ENCODE measurements at regions of chr21 and their contacts with region 1.

Region 1: DNA sequence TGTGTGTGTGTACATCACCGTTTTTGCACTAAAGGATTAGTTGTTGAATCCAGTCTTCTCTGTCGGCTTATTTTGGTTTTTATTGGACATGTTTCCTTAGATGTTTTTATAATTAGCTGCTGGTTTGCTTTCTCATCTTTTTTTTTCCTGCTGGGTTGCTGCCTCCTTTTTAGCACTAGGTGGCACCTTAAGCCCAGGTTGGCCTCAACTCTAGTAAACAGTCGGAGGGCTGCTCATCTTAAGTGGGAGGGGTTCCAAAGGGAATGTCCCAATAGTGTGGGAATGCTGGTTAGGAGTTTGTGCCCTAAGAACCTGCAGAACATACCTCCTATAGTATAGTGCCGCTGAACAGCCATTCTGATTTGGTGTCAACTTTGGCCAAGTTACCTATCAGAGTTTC is 570.1 kb upstream of the CXADR start:
- DNase-seq: peak; percentile 43 to 57
- H3K4me3 ChIP-seq: no peak overlapping the region
- H3K4me3 Mint-ChIP-seq: no peak overlapping the region
- H3K27ac Mint-ChIP-seq: no peak overlapping the region
- H3K4me1 ChIP-seq: no peaks in the 10 kb centered on the region
- H3K4me1 Mint-ChIP-seq: no peaks in the 10 kb centered on the region
- H3K27me3 ChIP-seq: no peaks in the 10 kb centered on the region
- H3K27me3 Mint-ChIP-seq: peaks cover 10% of the 10 kb centered on the region
- CTCF ChIP-seq: peak; percentile 62 to 79

Region 2: GRCh38 chr21:17045214-17045853 is 102.6 kb after region 1 on chr21:
- CTCF ChIA-PET with region 1: interaction called, 3 read pairs
- POLR2A ChIA-PET with region 1: no interaction called
- intact Hi-C with region 1: loop called (anchors 2 kb)
- DNase-seq: peak in 1 of 2 experiments; percentile 15
- H3K4me3 ChIP-seq: no peak overlapping the region
- H3K4me3 Mint-ChIP-seq: no peak overlapping the region
- H3K27ac Mint-ChIP-seq: no peak overlapping the region
- H3K4me1 ChIP-seq: no peaks in the 10 kb centered on the region
- H3K4me1 Mint-ChIP-seq: no peaks in the 10 kb centered on the region
- H3K27me3 ChIP-seq: no peaks in the 10 kb centered on the region; the same call in 1 of the 2 replicates
- H3K27me3 Mint-ChIP-seq: no peaks in the 10 kb centered on the region
- CTCF ChIP-seq: peak; percentile 33 to 47

Region 3: DNA sequence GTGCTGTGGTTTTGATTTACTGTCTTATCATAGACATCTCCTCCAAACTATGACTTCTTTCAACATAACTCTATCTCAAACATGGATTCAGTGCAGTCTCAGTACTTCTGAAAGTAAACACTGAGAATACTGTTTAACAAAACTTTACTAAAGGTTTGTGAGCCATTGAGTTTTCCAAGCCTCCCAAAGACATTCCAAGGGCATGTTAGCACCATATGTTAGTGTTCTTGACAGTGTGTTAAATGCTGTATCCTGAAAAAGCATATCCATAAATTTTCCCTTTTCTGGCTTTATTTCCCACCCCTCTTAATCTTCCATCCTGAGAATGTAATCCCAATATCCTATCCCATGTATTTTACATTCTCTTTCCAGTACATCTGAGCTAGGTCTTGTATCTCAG is 123.3 kb after region 1 on chr21:
- CTCF ChIA-PET with region 1: no interaction called
- POLR2A ChIA-PET with region 1: no interaction called
- intact Hi-C with region 1: no loop called
- DNase-seq: no peak
- H3K4me3 ChIP-seq: no peak overlapping the region
- H3K4me3 Mint-ChIP-seq: no peak overlapping the region
- H3K27ac Mint-ChIP-seq: no peak overlapping the region
- H3K4me1 ChIP-seq: no peaks in the 10 kb centered on the region
- H3K4me1 Mint-ChIP-seq: no peaks in the 10 kb centered on the region
- H3K27me3 ChIP-seq: no peaks in the 10 kb centered on the region
- H3K27me3 Mint-ChIP-seq: peaks cover 8% of the 10 kb centered on the region
- CTCF ChIP-seq: no peak

Region 4: GRCh38 chr21:17146431-17146830 is 203.7 kb after region 1 on chr21:
- CTCF ChIA-PET with region 1: no interaction called
- POLR2A ChIA-PET with region 1: no interaction called
- intact Hi-C with region 1: loop called (anchors 2 kb)
- DNase-seq: no peak
- H3K4me3 ChIP-seq: no peak overlapping the region
- H3K4me3 Mint-ChIP-seq: no peak overlapping the region
- H3K27ac Mint-ChIP-seq: no peak overlapping the region
- H3K4me1 ChIP-seq: no peaks in the 10 kb centered on the region
- H3K4me1 Mint-ChIP-seq: no peaks in the 10 kb centered on the region
- H3K27me3 ChIP-seq: no peaks in the 10 kb centered on the region
- H3K27me3 Mint-ChIP-seq: peaks cover 20% of the 10 kb centered on the region
- CTCF ChIP-seq: no peak

Region 5: DNA sequence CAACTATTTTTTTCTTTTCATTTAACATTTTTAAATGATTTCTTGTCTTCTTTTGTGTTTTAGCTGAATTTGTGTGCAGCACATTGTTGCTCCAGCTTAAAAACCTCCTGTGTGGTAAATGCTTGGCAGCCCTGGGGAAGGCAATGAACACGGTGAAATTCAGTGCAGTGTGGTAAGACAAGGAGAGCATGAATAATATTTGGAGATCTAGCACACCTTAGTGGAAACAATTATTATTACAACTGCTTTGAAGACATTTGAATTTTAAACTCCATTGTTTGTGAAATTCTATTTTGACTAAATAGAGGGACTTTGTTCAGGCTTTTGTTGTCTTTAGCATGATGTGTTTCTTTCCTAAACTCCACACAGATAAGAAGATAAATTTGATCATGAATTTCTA is 327.5 kb after region 1 on chr21:
- CTCF ChIA-PET with region 1: no interaction called
- POLR2A ChIA-PET with region 1: no interaction called
- intact Hi-C with region 1: loop called (anchors 1 kb)
- DNase-seq: peak in 1 of 2 experiments; percentile 12
- H3K4me3 ChIP-seq: no peak overlapping the region
- H3K4me3 Mint-ChIP-seq: no peak overlapping the region
- H3K27ac Mint-ChIP-seq: no peak overlapping the region
- H3K4me1 ChIP-seq: no peaks in the 10 kb centered on the region
- H3K4me1 Mint-ChIP-seq: no peaks in the 10 kb centered on the region
- H3K27me3 ChIP-seq: no peaks in the 10 kb centered on the region
- H3K27me3 Mint-ChIP-seq: peaks cover 12% of the 10 kb centered on the region
- CTCF ChIP-seq: peak; percentile 14 to 50

Measured in Caco-2 (cell line).